Kidney (tissue), 22 donors: ENCODE measurements at regions of chr12 and their contacts with region 1.

Region 1: DNA sequence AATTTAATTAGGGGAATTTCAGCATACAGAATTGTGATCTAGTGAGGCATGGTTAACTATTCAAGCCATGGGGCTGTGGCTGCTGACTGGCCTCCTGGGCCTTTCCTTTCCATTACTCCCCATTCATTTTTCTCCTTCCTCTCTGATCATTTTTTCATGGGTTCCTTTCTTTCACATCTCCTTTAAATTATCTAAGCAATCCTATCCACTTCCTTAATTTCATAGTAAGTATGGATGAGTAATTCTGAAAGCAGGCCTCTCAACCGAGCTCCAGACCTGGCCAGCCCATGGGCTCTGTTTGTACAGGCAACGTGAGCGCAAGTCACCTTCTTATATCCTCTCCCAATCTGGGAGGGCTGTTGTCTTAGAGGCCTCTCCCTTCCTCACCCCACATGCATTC is 13.4 kb downstream of the CKAP4 start:
- DNase-seq: no peak
- H3K4me3 ChIP-seq: no peak overlapping the region
- H3K27ac ChIP-seq: no peak overlapping the region
- H3K4me1 ChIP-seq: no peaks in the 10 kb centered on the region
- H3K27me3 ChIP-seq: no peaks in the 10 kb centered on the region
- CTCF ChIP-seq: no peak

Region 2: GRCh38 chr12:106282457-106283097 is 48.1 kb after region 1 on chr12:
- intact Hi-C with region 1: loop called (anchors 10 kb)
- DNase-seq: peak in 4 of 5 donors; percentile 30 to 62 (median 47)
- H3K4me3 ChIP-seq: no peak overlapping the region
- H3K27ac ChIP-seq: no peak overlapping the region
- H3K4me1 ChIP-seq: no peaks in the 10 kb centered on the region
- H3K27me3 ChIP-seq: no peaks in the 10 kb centered on the region
- CTCF ChIP-seq: peak; percentile 76